Head of caudate nucleus (tissue), 42 donors: ENCODE measurements at regions of chr1 and their contacts with region 1.

Region 1: GRCh38 chr1:208081972-208082371 is 162.2 kb downstream of the PLXNA2 start:
- DNase-seq: peak in 31 of 42 donors; percentile 29 to 83 (median 58)

Region 2: DNA sequence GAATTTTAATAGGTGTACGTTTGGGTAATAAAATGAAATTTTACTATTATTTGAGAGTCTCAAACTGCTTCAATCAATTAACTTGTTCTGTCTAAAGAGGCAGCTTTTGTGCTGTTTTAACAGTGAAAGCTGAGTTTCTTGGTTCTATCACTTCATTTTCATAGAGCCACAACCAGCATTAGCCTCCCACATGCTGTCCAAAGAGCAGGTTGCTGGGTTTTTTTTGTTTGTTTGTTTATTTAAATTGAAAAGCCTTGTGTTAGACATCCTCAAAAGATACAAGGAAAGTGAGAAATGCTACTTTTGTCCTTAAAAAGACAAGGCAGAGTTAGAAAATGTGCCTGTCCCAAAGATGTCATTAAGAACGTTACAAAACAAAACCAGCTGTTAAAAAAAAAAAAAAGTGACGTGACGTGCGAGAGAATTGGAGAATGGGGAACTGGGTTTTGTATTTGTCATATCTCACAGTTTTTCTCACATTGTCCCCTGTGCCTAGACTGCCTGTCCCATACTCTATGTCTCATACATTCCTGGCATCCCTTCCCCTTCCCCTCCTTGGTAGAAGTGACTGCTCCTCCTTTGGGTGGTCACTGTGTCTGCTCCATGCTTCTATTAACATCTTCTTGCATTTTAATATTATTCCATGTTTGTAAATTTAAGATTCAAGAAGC is 107.9 kb before region 1 on chr1:
- intact Hi-C with region 1: no loop called
- DNase-seq: no peak

Region 3: DNA sequence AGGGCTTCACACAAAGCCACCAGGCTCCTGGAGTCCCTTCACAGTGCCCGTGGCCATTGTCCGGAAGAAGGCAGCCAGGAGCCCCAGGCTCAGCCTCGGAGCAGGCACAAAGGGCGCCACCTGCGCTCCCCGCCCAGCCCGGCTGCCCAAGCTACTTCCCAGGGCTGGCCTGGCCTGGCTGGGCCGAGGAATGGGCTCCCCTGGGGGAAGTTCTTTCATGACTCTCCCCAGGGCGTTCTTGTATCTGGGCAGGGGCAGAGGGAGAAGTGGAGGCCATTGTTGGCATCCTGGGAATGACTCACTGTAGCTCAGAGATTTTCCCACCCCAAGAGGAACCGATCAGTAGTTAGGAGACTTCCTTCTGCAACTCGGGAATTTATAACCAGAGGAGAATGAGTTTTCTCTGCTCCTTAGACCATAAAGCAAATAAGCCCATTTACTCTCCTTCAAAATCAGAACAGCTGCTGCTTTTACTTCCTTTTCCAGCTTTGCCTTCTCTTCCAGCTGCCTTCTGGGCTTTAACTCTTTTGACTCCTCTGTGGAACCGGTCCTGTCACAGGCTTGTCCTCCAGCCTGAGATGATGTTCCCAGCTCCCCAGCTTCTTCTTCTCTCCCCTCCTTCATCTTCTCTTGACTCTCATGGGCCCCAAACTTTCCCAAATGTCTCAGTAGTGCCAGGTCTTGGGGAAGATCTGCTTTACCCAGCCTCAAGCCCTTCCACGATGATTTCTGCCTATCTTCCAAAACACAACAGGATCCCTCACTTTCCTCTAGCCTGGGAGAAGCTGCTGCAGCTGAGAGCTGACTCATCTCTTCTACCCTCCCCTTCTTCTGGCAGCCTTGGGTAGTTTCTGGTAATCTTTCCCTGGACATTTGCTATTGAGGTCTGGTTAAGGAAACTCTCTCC is 52.3 kb before region 1 on chr1:
- intact Hi-C with region 1: loop called (anchors 10 kb)
- DNase-seq: no peak

Region 4: GRCh38 chr1:208245185-208245705 is 163.3 kb after region 1 on chr1:
- intact Hi-C with region 1: loop called (anchors 10 kb)
- DNase-seq: peak; percentile 71 to 96 (median 89)